Right ventricle myocardium inferior (tissue), 1 donor: ENCODE measurements at regions of chr19 and their contacts with region 1.

Region 1: GRCh38 chr19:4123615-4124568 is at the start of gene MAP2K2:
- DNase-seq: peak; percentile 97
- ATAC-seq: peak; percentile 98
- total RNA-seq, gene MAP2K2: 138 TPM

Region 2: DNA sequence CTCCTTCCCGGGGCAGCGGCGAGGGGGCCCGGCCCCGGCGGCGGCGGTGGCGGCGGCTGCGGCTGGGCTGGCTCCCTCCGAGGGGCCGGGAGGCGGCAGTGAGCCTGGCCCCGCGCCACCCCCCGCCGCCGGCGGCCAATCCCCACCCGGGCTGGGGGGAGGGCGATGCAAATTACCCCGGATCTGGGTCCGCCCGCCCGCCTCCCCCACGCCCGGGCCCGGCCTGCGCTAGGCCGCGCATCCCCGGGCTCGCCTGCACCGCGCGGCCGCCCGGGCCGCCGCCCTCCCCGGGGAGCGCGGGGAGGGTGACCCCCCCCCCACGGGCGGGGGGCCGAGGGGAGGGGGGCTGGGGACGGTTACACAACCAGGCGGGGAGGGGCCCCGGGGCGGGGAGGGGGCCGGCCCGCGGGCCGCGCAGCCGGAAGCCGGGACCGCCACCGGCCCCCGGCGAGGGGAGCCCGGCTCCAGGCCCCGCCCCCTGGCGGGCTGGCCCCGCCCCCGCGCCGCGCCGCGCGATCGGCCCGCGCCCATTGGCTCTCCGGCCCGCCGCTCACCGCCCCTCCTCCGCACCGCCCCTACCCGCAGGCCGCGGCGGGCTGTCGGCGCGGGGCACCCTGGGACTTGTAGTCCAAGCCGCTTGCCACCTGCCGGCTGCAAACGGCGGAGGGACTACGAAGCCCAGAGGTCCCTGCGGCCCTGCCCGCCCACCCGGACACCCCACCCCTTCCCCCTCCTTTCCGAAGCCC is 58.3 kb before region 1 on chr19:
- intact Hi-C with region 1: loop called (anchors 5 kb)
- DNase-seq: peak; percentile 98
- ATAC-seq: peak; percentile 88

Region 3: DNA sequence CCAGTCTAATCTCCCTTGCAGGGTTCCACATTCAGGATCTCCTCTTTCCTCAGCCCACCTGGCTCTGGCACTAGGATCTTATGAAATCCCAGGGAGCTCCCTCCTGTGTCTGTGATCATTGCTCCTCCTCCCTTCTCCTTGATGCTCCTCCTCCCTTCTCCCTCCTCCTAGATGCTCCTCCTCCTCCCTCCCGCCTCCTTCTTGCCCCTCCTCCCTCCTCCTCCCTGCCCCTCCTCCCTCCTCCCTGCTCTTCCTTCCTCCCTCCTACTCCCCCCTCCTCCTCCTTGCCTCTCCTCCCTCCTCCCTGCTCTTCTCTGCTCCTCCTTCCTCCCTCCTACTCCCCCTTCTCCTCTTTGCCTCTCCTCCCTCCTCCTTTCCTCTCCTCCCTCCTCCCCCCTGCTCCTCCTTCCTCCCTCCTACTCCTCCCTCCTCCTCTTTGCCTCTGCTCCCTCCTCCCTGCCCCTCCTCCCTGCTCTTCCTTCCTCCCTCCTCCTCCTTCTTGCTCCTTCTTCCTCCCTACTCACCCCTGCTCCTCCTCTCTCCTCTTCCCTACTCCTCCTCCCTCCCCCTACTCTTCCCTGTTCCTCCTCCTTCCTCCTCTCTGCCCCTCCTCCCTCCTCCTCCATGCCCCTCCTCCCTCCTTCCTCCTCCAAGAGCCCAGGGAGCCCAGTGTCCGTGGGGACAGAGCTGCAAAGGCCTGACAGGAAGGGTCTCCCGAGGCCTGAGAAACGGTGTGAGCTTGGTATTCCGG is 42.3 kb before region 1 on chr19:
- intact Hi-C with region 1: loop called (anchors 2 kb)
- DNase-seq: no peak
- ATAC-seq: no peak

Region 4: GRCh38 chr19:4182084-4182810 is 58.4 kb after region 1 on chr19 and contains the starts of genes ANKRD24 and SIRT6:
- intact Hi-C with region 1: loop called (anchors 5 kb)
- DNase-seq: peak; percentile 98
- ATAC-seq: peak; percentile 96
- total RNA-seq, gene ANKRD24: 0.19 TPM
- total RNA-seq, gene SIRT6: 10.4 TPM

Region 5: GRCh38 chr19:4342615-4343369 is 218.9 kb after region 1 on chr19:
- intact Hi-C with region 1: no loop called
- DNase-seq: peak; percentile 98
- ATAC-seq: peak; percentile 97